ENCODE measurements at regions of chr2 and their contacts with region 1.

Region 1: DNA sequence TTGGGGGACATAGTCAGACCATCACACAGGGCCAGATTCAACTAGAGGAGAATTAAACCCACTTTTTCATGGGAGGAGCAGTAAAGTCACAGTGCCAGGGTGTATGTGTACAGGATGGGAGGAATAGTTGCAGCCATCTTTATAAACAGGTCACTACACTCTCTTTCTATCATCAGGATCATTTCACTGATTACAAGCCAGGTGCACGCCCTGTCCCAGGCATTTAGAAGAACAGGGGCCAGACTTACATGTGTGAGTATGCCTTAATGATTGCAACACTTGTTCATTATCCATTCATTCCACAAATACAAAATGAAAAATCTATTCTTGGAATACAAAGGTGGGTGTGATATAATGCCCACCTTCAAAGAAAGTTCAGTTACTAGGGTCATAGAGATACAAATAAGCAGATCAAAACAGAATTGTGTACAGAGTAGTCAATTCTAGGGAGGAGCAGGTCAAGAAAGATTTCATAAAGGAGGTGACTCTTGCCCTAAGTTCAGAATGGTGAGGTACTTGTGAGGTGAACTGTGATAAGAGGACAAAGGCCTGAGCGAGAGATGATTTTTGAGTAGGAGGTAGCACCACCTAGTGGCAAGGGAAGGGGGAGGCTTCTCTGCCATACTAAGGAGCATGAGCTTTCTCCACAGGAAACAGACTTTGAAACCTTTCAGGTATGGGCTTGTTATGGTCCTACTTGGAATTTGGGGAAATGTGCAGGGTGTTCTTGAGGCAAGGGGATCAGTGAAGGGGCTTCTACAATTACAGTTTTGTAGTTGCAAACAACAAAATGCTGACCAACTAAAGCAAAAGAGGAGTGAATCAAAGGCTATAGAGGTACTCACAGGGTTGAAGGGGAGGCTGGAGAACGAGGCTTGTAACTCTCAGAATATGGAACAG is 156.3 kb downstream of the SUCLG1 start:
- DNase-seq: peak; percentile 66
- CTCF ChIP-seq: peak; percentile 78

Region 2: GRCh38 chr2:84022810-84023431 is 279.8 kb before region 1 on chr2:
- in situ Hi-C with region 1: loop called (anchors 10 kb)
- DNase-seq: peak; percentile 14
- CTCF ChIP-seq: peak; percentile 25

Measured in GM13976 (cell line).